ENCODE measurements at regions of chr16 and their contacts with region 1.

Region 1: DNA sequence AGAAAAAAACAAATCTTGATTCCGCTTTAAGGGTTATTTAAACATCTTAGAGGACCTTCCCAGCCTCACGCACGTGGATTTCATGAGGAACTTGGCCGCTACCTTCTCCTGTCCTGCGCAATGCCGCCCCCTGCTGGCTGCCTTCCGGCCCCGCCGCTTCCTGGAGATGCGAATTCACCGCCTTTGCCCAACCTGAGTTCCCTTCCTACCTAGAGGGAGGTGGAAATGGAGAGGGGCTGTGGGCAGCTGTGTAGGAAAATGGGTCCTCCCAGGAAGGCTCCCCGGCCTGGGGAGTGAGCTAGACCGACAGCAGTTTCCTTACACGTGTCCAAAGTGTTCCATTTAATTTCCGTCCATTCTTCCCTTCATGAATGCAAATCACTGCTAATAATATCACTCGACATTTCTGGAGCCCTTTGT is 1.0 kb upstream of the ABCC12 start:
- DNase-seq: peak; percentile 66
- H3K4me3 Mint-ChIP-seq: no peak overlapping the region
- H3K27ac Mint-ChIP-seq: peak overlapping the region; percentile 31
- H3K4me1 Mint-ChIP-seq: peaks cover 31% of the 10 kb centered on the region
- H3K27me3 Mint-ChIP-seq: peaks cover 9% of the 10 kb centered on the region

Region 2: GRCh38 chr16:46689365-46690280 is 1467.2 kb before region 1 on chr16 and contains the start of gene ORC6:
- intact Hi-C with region 1: loop called (anchors 5 kb)
- DNase-seq: peak; percentile 95
- H3K4me3 Mint-ChIP-seq: no peak within 1 kb of the TSS
- H3K27ac Mint-ChIP-seq: no peak within 1 kb of the TSS
- H3K4me1 Mint-ChIP-seq: peaks cover 29% of the 10 kb centered on the region
- H3K27me3 Mint-ChIP-seq: no peaks in the 10 kb centered on the region
- total RNA-seq, gene ORC6: 68.2 and 69.1 TPM in 2 replicates

Region 3: GRCh38 chr16:46763147-46763546 is 1393.7 kb before region 1 on chr16:
- intact Hi-C with region 1: no loop called
- DNase-seq: no peak
- H3K4me3 Mint-ChIP-seq: no peak overlapping the region
- H3K27ac Mint-ChIP-seq: no peak overlapping the region
- H3K4me1 Mint-ChIP-seq: peaks cover 5% of the 10 kb centered on the region
- H3K27me3 Mint-ChIP-seq: peaks cover 7% of the 10 kb centered on the region

Region 4: GRCh38 chr16:46947900-46948547 is 1208.8 kb before region 1 on chr16:
- intact Hi-C with region 1: loop called (anchors 2 kb)
- DNase-seq: peak; percentile 19
- H3K4me3 Mint-ChIP-seq: no peak overlapping the region
- H3K27ac Mint-ChIP-seq: no peak overlapping the region
- H3K4me1 Mint-ChIP-seq: peaks cover 9% of the 10 kb centered on the region
- H3K27me3 Mint-ChIP-seq: peaks cover 2% of the 10 kb centered on the region

Region 5: GRCh38 chr16:47037746-47038458 is 1118.9 kb before region 1 on chr16:
- intact Hi-C with region 1: loop called (anchors 1 kb)
- DNase-seq: peak; percentile 85
- H3K4me3 Mint-ChIP-seq: peak overlapping the region; percentile 81
- H3K27ac Mint-ChIP-seq: no peak overlapping the region
- H3K4me1 Mint-ChIP-seq: peaks cover 4% of the 10 kb centered on the region
- H3K27me3 Mint-ChIP-seq: peaks cover 14% of the 10 kb centered on the region

Region 6: DNA sequence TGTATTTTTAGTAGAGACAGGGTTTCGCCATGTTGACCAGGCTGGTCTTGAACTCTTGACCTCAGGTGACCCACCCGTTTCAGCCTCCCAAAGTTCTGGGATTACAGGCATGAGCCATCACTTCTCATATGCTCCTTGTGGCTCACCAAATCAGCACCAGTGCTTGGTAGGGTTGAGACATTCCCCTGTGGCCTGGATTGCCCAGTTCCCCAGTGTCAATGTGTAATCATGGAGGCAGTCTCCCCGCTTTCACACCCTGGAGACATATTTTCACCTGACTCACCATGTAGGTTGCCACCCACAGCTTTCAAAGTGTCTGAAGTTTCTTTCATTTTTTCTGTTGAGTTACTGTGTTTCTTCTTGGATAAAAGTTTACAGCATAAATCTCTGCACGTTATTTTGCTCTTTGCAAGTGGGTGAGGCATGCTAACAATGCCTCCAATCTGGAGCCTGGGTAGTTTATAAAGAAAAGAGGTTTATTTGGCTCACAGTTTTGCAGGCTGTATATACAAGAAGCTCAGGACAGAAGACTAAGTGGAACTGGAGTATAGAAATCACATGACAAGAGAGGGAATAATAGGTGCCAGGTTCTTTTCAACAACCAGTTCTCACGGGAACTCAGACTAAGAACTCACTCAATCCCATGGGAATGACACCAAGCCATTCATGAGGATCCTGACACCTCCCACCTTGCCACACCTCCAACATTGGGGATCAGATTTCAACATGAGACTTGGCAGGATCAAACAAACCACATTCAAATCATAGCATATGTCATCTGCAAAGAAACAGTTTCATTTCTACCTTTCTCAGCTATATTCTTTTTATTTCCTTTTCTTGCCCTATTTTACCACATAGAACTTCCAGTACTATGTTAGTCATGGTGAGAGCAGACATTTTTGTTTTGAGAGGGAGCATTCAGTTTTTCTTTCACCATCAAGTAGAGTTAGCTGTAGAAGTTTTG is 582.4 kb before region 1 on chr16:
- intact Hi-C with region 1: loop called (anchors 1 kb)
- DNase-seq: no peak
- H3K4me3 Mint-ChIP-seq: peak overlapping the region; percentile 5
- H3K27ac Mint-ChIP-seq: peak overlapping the region; percentile 45
- H3K4me1 Mint-ChIP-seq: peaks cover 55% of the 10 kb centered on the region
- H3K27me3 Mint-ChIP-seq: no peaks in the 10 kb centered on the region

Region 7: GRCh38 chr16:48123104-48123788 is 33.6 kb before region 1 on chr16:
- intact Hi-C with region 1: loop called (anchors 1 kb)
- DNase-seq: peak; percentile 13
- H3K4me3 Mint-ChIP-seq: no peak overlapping the region
- H3K27ac Mint-ChIP-seq: peak overlapping the region; percentile 36
- H3K4me1 Mint-ChIP-seq: peaks cover 40% of the 10 kb centered on the region
- H3K27me3 Mint-ChIP-seq: no peaks in the 10 kb centered on the region

Region 8: DNA sequence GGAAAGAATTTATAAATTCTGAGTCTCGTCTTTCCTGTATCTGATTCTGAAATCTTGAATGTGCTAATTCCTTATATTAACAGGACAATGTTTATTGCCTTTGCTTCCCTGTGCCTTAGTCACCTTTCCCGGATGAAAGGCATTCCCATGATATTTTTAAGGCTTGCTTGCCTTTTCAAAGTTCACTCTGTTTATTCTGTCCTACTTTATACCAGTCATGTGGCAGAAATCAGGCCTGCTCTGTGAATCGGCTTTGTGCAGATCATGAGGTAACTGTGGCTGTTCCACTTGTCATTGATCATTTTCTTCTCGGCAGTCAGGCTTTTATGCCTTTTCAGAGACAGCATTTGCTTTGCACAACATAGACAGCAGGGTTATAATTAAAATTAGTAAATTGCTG is 119.3 kb after region 1 on chr16:
- intact Hi-C with region 1: no loop called
- DNase-seq: no peak
- H3K4me3 Mint-ChIP-seq: no peak overlapping the region
- H3K27ac Mint-ChIP-seq: no peak overlapping the region
- H3K4me1 Mint-ChIP-seq: no peaks in the 10 kb centered on the region
- H3K27me3 Mint-ChIP-seq: no peaks in the 10 kb centered on the region